ENCODE measurements at regions of chr5 and their contacts with region 1.

Region 1: DNA sequence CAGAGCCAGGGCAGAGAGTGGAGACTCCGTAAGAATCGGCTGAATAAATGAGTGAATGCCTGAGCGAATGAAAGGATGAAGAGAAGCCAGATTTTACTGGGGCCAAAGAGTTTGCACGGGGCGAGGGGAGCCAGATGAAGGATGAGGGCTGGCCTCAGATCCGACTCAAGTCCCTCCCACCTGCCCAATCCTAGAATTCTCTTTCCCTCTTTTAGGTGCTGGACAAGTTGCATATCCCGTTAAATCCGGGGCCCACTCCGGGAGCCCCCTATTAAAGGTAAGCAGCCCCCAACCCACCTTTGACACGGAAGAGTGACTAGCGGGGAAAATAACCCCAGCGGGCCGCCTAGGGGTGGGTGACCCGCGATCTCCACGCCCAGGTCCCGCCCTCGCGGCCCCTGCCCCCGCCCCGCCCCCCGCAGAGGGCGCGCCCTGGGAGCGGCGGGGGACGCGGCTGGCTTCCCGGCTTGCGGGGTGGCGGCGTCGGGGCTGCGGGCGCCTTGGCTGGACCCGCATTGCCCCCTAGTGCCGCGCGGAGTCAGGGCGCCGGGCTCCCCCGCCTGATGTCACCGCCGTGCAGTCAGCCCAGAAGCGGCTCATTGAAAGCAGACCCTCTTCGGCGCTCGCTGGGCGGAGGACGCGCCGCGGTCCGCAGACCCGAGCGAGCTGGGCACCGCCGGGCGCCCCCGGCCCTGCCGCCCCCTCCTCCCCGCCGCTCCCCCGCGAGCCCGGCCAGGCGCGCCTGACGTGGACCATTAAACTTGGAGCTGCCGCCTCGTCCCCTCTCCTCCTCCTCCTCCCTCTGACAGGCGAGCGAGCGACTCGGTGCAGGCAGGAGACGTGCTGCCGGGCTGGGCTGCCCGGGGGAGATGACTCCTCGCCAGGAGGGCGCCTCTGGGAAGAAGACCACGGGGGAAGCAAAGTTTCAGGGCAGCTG is at the start of gene ADRA1B:
- DNase-seq: peak in 1 of 3 donors; percentile 28
- H3K4me3 ChIP-seq: no peak within 1 kb of the TSS
- H3K4me3 Mint-ChIP-seq: peak within 1 kb of the TSS in 1 of 2 donors; percentile 79
- H3K27ac ChIP-seq: no peak within 1 kb of the TSS
- H3K27ac Mint-ChIP-seq: peak within 1 kb of the TSS in 1 of 7 donors; percentile 37
- H3K4me1 ChIP-seq: peaks cover 3 to 10% of the 10 kb centered on the region in 2 donors
- H3K4me1 Mint-ChIP-seq: peaks cover 9% of the 10 kb centered on the region
- H3K27me3 ChIP-seq: peaks cover 35 to 57% of the 10 kb centered on the region in 2 donors
- H3K27me3 Mint-ChIP-seq: peaks cover 40 to 61% (median 46%) of the 10 kb centered on the region in 3 donors
- CTCF ChIP-seq: peak; percentile 35
- polyA plus RNA-seq, gene ADRA1B: not detected

Region 2: GRCh38 chr5:159515909-159516415 is 400.2 kb before region 1 on chr5:
- intact Hi-C with region 1: loop called in 1 of 2 experiments (anchors 5 kb)
- DNase-seq: peak; percentile 37 to 70 (median 52)
- H3K4me3 ChIP-seq: no peak overlapping the region
- H3K4me3 Mint-ChIP-seq: no peak overlapping the region
- H3K27ac ChIP-seq: no peak overlapping the region
- H3K27ac Mint-ChIP-seq: no peak overlapping the region
- H3K4me1 ChIP-seq: no peaks in the 10 kb centered on the region
- H3K4me1 Mint-ChIP-seq: peaks cover 2% of the 10 kb centered on the region
- H3K27me3 ChIP-seq: no peaks in the 10 kb centered on the region
- H3K27me3 Mint-ChIP-seq: peaks cover 2 to 6% (median 3%) of the 10 kb centered on the region in 3 donors
- CTCF ChIP-seq: peak; percentile 86